Activated B cell treated with CpG ODN at 0.5 μM for 24 hours (primary cell): ENCODE measurements at regions of chr4 and their contacts with region 1.

Region 1: GRCh38 chr4:86043755-86044592 is 315.9 kb downstream of the MAPK10 start:
- DNase-seq: no peak
- ATAC-seq: no peak
- H3K4me3 Mint-ChIP-seq: no peak overlapping the region
- H3K27ac Mint-ChIP-seq: no peak overlapping the region
- H3K4me1 Mint-ChIP-seq: no peaks in the 10 kb centered on the region
- H3K27me3 Mint-ChIP-seq: peaks cover 2% of the 10 kb centered on the region
- CTCF ChIP-seq: peak; percentile 43

Region 2: DNA sequence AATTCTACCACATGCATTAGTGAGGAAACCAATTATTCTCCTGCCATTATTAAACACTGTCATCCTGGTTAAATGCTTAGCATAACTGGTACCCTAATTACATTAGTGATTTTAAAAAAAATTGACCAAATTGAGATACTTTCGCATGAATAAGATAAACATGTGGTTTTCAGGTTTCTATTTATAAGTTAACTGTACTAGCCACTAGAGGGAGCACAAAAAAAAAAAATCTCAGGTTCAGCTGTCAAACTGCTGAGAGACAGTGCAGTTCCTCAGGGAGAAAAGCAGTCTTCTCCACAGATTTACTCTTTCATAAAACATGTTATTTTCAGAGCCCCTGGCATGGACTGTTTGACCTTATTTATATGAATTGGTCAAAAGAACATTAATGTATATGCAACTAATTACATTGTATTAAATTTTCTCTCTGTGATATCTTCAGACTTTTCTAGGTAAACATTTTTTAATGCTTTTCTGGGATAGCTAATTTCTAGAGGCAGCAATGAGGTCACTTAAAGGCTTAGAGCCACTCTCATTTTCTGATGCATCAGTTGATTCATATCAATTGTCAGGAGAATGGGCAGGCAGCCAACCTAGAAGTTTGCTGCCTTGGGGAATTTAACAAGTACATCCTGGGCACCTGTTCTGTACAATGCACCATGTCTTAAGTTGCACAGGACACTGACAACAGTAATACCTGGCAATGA is 1293.6 kb before region 1 on chr4:
- CTCF ChIA-PET with region 1: interaction called, 4 read pairs
- POLR2A ChIA-PET with region 1: no interaction called
- intact Hi-C with region 1: loop called (anchors 2 kb)
- DNase-seq: no peak
- ATAC-seq: no peak
- H3K4me3 Mint-ChIP-seq: no peak overlapping the region
- H3K27ac Mint-ChIP-seq: no peak overlapping the region
- H3K4me1 Mint-ChIP-seq: no peaks in the 10 kb centered on the region
- H3K27me3 Mint-ChIP-seq: peaks cover 5% of the 10 kb centered on the region
- CTCF ChIP-seq: peak; percentile 51

Region 3: DNA sequence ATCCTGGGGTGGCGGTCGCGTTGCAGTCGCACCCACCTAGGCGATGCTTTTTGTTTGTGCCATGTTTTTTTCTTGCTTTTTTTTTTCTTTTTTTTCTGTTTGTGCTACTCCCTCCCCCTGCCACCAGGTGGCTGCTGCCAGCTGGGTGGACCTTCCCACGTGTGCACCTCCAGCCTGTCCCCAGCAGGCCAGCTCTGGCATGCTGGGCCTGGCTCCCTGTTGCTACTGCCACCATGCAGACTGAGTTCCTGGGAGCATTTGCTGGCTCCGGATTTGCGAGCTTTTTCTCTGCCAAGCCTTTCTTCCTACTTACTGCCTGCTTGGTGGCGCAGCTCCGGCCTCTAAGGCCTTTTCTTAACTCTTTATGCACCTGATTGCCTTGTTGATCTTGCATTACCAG is 916.3 kb before region 1 on chr4:
- CTCF ChIA-PET with region 1: interaction called, 4 read pairs
- POLR2A ChIA-PET with region 1: no interaction called
- intact Hi-C with region 1: loop called (anchors 1 kb)
- DNase-seq: no peak
- ATAC-seq: peak; percentile 82
- H3K4me3 Mint-ChIP-seq: no peak overlapping the region
- H3K27ac Mint-ChIP-seq: no peak overlapping the region
- H3K4me1 Mint-ChIP-seq: no peaks in the 10 kb centered on the region
- H3K27me3 Mint-ChIP-seq: no peaks in the 10 kb centered on the region
- CTCF ChIP-seq: no peak

Region 4: DNA sequence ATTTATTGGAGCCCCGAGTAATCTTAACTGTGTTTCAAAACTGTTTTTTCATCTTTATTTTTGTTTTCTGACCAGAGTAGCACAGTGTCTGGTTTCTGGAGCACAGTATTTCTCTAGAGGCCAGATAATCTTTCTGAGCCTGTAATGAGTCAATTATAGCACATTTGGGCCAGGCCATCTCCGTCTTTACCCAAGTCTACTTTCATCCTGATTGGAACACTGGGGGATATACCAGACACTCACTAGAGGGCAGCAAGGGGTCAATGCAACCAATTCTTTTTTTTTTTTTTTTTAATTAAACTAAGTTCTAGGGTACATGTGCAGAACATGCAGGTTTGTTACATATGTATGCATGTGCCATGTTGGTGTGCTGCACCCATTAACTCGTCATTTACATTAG is 287.0 kb before region 1 on chr4:
- CTCF ChIA-PET with region 1: no interaction called
- POLR2A ChIA-PET with region 1: interaction called, 3 read pairs
- intact Hi-C with region 1: loop called (anchors 1 kb)
- DNase-seq: no peak
- ATAC-seq: peak; percentile 31
- H3K4me3 Mint-ChIP-seq: no peak overlapping the region
- H3K27ac Mint-ChIP-seq: no peak overlapping the region
- H3K4me1 Mint-ChIP-seq: peaks cover 14% of the 10 kb centered on the region
- H3K27me3 Mint-ChIP-seq: no peaks in the 10 kb centered on the region
- CTCF ChIP-seq: no peak

Region 5: GRCh38 chr4:85968945-85969819 is 74.8 kb before region 1 on chr4:
- CTCF ChIA-PET with region 1: interaction called, 4 read pairs
- POLR2A ChIA-PET with region 1: no interaction called
- intact Hi-C with region 1: loop called (anchors 1 kb)
- DNase-seq: no peak
- ATAC-seq: no peak
- H3K4me3 Mint-ChIP-seq: no peak overlapping the region
- H3K27ac Mint-ChIP-seq: no peak overlapping the region
- H3K4me1 Mint-ChIP-seq: peaks cover 10% of the 10 kb centered on the region
- H3K27me3 Mint-ChIP-seq: no peaks in the 10 kb centered on the region
- CTCF ChIP-seq: no peak

Region 6: DNA sequence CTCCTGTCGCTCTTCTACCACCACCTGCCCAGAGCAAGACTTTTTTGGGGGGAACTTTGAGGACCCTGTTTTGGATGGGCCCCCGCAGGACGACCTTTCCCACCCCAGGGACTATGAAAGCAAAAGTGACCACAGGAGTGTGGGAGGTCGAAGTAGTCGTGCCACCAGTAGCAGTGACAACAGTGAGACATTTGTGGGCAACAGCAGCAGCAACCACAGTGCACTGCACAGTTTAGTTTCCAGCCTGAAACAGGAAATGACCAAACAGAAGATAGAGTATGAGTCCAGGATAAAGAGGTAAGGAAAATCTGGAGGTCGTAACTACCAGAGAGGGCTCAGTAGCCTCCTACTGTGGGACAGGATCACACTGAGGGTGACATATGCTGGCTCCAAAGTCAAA is 48.6 kb before region 1 on chr4:
- CTCF ChIA-PET with region 1: no interaction called
- POLR2A ChIA-PET with region 1: no interaction called
- intact Hi-C with region 1: no loop called
- DNase-seq: no peak
- ATAC-seq: no peak
- H3K4me3 Mint-ChIP-seq: no peak overlapping the region
- H3K27ac Mint-ChIP-seq: no peak overlapping the region
- H3K4me1 Mint-ChIP-seq: no peaks in the 10 kb centered on the region
- H3K27me3 Mint-ChIP-seq: no peaks in the 10 kb centered on the region
- CTCF ChIP-seq: no peak